ENCODE measurements at regions of chr9 and their contacts with region 1.

Region 1: DNA sequence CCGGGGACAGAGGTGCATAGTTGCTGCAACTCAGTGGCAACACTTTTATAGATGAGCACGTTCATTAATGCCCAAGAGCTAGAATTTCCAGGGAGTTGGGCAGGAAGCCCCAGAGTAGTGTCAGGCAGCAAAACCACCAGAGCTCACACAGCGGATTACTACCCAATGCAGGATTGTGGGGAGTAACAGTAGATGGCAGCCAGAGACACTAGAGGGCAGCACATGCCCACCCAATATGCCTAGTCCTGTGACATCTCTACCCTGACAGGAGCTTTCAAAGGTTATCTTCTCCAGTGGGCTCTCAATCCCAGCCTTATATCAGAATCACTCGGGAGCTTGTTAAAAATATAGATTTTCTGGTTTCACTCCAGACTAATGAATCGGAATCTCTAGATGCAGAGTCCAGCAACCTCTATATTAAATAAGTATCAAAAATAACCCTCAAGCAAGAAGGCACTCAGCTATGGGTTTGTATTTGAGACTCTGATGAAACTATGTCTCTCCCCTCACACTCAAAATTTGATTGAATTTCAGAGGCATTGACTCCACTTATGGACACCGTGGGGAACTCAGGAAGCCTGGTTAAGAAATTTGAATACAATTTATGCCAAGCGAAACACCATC is 58.4 kb upstream of the PHF24 start:
- DNase-seq: peak; percentile 90
- ATAC-seq: peak; percentile 100
- H3K4me3 Mint-ChIP-seq: no peak overlapping the region
- H3K27ac Mint-ChIP-seq: no peak overlapping the region
- H3K4me1 Mint-ChIP-seq: no peaks in the 10 kb centered on the region
- H3K27me3 Mint-ChIP-seq: peaks cover 30% of the 10 kb centered on the region

Region 2: GRCh38 chr9:34759432-34760134 is 140.1 kb before region 1 on chr9:
- CTCF ChIA-PET with region 1: interaction called, 6 read pairs
- POLR2A ChIA-PET with region 1: no interaction called
- intact Hi-C with region 1: loop called in 1 of 2 experiments (anchors 2 kb)
- DNase-seq: no peak
- ATAC-seq: no peak
- H3K4me3 Mint-ChIP-seq: no peak overlapping the region
- H3K27ac Mint-ChIP-seq: no peak overlapping the region
- H3K4me1 Mint-ChIP-seq: peaks cover 2% of the 10 kb centered on the region
- H3K27me3 Mint-ChIP-seq: peaks cover 22% of the 10 kb centered on the region

Region 3: DNA sequence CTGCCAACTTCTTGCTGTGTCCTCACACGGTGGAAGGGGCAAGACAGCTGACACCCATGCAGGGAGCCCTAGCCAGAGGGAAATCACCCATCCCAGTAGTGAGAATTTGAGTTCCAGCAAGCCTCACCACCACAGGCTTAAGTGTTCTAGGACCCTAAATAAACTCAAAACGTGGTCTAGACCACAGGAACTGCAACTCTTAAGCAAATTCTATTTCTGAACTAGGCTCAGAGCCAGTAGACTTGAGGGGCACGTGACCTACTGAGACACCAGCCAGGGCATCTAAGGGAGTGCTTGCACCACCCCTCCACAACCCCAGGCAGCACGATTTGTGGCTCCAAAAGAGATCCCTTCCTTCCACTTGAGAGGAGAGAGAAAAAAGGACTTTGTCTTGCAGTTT is 37.6 kb before region 1 on chr9:
- CTCF ChIA-PET with region 1: no interaction called
- POLR2A ChIA-PET with region 1: no interaction called
- intact Hi-C with region 1: no loop called
- DNase-seq: no peak
- ATAC-seq: no peak
- H3K4me3 Mint-ChIP-seq: no peak overlapping the region
- H3K27ac Mint-ChIP-seq: no peak overlapping the region
- H3K4me1 Mint-ChIP-seq: no peaks in the 10 kb centered on the region
- H3K27me3 Mint-ChIP-seq: peaks cover 24% of the 10 kb centered on the region

Region 4: DNA sequence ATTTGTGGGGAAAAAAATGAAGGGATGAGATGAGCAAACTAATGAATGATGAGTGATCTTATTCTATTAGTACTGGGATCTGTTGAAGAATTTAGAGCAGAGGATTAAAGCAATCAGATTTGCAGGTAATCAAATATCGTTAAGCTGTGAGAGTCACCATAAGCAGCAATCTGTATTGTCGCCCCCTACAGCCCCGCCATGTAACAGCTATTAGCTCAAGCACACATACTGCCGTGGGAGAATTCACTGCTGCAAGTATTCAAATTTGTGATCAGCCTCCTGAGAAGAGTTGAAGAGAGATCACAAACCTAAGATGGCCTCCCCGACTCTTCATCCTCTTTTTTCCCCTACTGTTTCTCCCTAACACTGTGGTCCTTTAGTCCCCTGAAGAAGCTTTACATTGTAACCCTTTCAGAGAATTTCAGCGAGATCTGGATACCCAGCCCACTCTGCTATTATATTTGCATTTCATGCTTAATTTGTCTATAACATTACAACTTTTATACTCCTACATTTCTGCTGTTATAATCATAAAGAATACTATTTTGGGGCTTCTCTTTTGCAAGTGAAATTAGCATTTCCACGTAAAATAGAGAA is 30.0 kb after region 1 on chr9:
- CTCF ChIA-PET with region 1: interaction called, 9 read pairs
- POLR2A ChIA-PET with region 1: no interaction called
- intact Hi-C with region 1: loop called in 1 of 2 experiments (anchors 2 kb)
- DNase-seq: peak; percentile 68
- ATAC-seq: peak; percentile 80
- H3K4me3 Mint-ChIP-seq: no peak overlapping the region
- H3K27ac Mint-ChIP-seq: no peak overlapping the region
- H3K4me1 Mint-ChIP-seq: peaks cover 14% of the 10 kb centered on the region
- H3K27me3 Mint-ChIP-seq: peaks cover 18% of the 10 kb centered on the region

Region 5: DNA sequence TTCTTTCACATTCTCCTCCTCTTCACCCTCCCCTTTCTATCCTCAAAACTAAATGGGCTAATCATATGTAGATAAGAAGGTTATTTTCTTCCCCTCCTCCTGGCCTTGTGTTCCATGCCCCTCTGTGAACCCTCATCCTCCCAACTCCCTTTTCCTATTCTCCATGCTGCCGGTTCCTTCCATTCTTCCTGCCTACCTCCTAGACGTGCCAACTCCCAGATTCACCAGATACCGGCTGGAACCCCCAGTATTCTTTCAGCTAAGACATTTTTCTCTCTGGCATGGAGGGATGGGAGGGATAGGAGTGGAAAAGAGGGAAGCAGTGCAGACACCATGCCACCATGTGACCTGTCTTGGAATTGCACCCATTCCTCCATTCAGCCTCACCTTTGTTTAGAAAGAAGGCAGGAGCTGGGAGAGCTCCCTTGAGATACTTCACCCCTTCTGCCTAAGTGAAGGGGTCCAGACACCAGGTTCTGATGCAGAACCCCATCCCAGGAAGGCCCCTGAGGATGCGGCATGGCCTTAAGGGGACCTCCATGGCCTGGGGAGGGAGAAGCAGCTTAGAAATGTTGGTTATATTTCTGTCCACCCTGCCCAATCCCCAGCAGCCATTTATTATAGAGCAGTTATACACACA is 94.7 kb after region 1 on chr9:
- CTCF ChIA-PET with region 1: interaction called, 24 read pairs
- POLR2A ChIA-PET with region 1: no interaction called
- intact Hi-C with region 1: no loop called
- DNase-seq: no peak
- ATAC-seq: no peak
- H3K4me3 Mint-ChIP-seq: no peak overlapping the region
- H3K27ac Mint-ChIP-seq: peak overlapping the region; percentile 13
- H3K4me1 Mint-ChIP-seq: peaks cover 54% of the 10 kb centered on the region
- H3K27me3 Mint-ChIP-seq: no peaks in the 10 kb centered on the region

Region 6: DNA sequence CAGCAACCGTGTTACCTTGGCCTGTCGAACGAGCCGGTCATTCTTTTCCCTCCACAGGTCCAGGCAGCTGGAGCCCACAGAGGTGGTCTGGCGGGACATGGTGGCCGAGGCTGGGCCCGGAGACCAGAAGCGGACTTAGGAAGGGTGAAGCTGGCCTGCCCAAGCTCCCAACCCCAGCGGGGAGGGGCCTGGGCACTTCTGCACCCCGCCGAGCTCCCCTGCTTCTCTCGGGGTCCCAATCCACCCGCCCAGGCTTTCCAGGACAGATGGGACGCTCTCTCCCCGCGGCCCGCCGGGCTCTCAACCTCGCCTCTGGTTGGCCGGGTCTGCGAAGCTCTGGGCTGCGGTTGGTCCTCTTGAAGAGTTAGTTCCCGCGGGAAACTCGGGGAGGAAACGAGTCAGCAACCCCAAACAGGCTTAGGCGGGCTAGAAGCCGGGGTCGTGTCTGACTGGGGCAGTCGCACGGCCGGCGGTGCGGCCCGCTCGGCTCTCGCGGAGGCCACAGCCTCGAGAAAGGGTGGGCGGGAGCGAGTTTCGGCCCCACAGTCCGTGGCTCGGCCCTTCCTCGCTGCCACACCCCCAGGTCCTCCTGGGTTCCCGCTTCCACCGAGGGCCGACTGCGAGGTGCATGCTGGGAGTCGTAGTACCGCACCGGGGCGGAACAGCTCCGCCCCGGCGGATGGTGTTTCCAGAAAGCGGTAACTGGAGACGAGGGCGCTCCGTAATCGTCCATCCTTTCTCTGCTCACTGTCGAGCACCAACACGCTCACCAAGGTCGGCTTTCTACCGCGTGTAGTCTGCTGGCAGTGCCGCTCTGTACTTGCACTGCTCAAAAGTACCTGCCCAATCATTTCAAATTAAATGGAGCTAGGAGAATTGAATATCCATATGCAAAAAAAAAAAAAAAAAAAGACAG is 180.0 kb after region 1 on chr9 and contains the start of gene FANCG:
- CTCF ChIA-PET with region 1: interaction called, 13 read pairs
- POLR2A ChIA-PET with region 1: no interaction called
- intact Hi-C with region 1: no loop called
- DNase-seq: peak; percentile 93
- ATAC-seq: peak; percentile 94
- H3K4me3 Mint-ChIP-seq: peak within 1 kb of the TSS; percentile 81
- H3K27ac Mint-ChIP-seq: peak within 1 kb of the TSS; percentile 96
- H3K4me1 Mint-ChIP-seq: peaks cover 16% of the 10 kb centered on the region
- H3K27me3 Mint-ChIP-seq: no peaks in the 10 kb centered on the region
- total RNA-seq, gene FANCG: 92.8 to 93.4 TPM

Region 7: GRCh38 chr9:35258676-35259474 is 359.2 kb after region 1 on chr9:
- CTCF ChIA-PET with region 1: interaction called, 11 read pairs
- POLR2A ChIA-PET with region 1: no interaction called
- intact Hi-C with region 1: loop called in 1 of 2 experiments (anchors 5 kb)
- DNase-seq: peak; percentile 68
- ATAC-seq: peak; percentile 42
- H3K4me3 Mint-ChIP-seq: no peak overlapping the region
- H3K27ac Mint-ChIP-seq: no peak overlapping the region
- H3K4me1 Mint-ChIP-seq: no peaks in the 10 kb centered on the region
- H3K27me3 Mint-ChIP-seq: peaks cover 2% of the 10 kb centered on the region

Region 8: DNA sequence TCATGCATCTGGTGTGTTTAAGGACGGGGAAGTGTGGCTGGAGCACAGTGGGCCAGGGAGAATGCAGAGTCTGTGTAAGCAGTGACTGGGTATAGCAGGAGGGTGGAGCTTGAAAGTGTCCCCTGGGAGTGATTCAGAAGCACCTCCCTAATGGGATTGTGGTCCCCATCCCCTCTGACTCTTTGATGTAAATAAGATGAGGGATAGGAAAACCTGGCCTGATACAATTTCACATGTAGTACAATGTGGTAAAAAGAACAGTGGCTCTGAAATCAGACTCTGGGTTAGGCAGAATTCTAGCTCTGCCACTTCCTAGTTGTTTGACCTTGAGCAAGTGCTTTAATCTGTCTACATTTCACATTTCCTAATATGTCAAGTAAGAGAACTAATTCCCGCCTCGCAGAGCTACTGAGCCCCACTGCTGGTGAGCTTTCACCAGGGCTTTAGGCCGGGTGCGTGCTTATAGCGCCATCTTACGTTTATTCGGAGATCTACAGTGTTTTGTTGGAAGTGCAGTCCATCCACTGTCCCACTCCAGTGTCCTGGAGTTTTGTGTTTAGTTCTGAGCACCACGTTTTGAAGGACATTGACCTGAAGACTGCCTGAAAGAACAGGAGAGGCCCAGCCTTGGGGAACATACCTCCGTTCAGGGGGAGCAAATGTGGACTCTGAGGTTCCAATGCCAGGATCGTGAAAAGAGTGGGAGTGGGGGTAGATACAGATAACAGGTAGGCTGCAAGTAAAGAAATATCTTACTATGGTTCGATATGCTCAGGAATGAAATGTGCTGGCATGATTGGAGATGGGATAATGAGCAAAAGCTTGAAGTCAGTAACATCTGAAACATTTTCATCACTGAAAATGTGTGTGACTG is 654.3 kb after region 1 on chr9:
- CTCF ChIA-PET with region 1: interaction called, 9 read pairs
- POLR2A ChIA-PET with region 1: no interaction called
- intact Hi-C with region 1: loop called in 1 of 2 experiments (anchors 2 kb)
- DNase-seq: peak; percentile 69
- ATAC-seq: peak; percentile 86
- H3K4me3 Mint-ChIP-seq: no peak overlapping the region
- H3K27ac Mint-ChIP-seq: no peak overlapping the region
- H3K4me1 Mint-ChIP-seq: no peaks in the 10 kb centered on the region
- H3K27me3 Mint-ChIP-seq: no peaks in the 10 kb centered on the region